Activated T-helper 1 cell treated with anti-CD3 and anti-CD28 coated beads, Interleukin-12 subunit alpha, Interleukin-12 subunit beta, Interleukin-2, Interleukin-4 antibody, amounts not matched to agents 30 ng/mL and 10 ng/mL and 1 ng/mL, durations not matched to agents 14 hours and 24 hours and 36 hours (primary cell): ENCODE measurements at regions of chr19 and their contacts with region 1.

Region 1: DNA sequence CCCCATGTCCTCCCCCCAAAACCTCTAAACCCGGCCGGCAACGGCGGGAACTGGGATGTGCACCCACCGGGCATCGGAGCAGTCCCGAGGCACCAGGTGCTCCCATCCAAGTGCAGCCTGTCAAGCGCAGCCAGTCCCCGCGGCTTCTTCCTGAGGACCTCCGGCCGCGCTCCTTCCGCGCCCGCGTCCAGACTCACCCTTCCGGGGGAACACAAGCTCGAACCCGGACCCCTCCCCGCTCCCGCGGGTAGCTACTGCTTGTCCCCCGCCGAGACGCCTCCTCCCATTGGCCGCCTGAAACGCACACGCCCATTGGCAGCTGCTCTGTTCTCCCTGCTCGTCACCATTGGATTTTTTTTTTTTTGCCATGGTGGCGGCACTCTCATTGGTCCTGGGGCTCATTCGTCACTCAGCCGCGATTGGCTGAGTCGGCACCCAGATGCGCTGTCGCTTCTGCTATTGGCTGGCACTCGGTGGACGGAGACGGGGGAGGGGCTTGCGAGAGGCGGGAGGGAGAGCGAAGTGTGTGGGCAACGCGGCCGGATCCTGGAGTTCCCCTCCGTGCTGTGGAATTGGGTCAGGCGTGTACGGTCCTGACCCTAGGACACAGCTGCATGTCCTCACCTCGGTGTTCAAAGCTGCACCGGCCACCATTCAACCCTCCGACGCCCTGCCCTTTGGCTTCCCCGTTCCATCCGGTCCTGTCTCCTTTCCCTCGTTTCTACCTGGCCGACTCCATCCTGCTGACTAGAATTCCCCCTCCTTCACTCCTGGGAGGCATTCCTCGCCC is at the start of gene TYK2:
- DNase-seq: peak; percentile 98
- H3K4me3 Mint-ChIP-seq: peak within 1 kb of the TSS; percentile 95
- H3K27ac Mint-ChIP-seq: peak within 1 kb of the TSS; percentile 97
- H3K4me1 Mint-ChIP-seq: peaks cover 27% of the 10 kb centered on the region
- H3K27me3 Mint-ChIP-seq: peaks cover 3% of the 10 kb centered on the region
- total RNA-seq, gene TYK2: 268 and 271 TPM in 2 replicates

Region 2: GRCh38 chr19:9834726-9835506 is 545.6 kb before region 1 on chr19 and contains the start of gene PIN1:
- intact Hi-C with region 1: loop called (anchors 1 kb)
- DNase-seq: peak; percentile 99
- H3K4me3 Mint-ChIP-seq: peak within 1 kb of the TSS; percentile 97
- H3K27ac Mint-ChIP-seq: peak within 1 kb of the TSS; percentile 90
- H3K4me1 Mint-ChIP-seq: peaks cover 10% of the 10 kb centered on the region
- H3K27me3 Mint-ChIP-seq: no peaks in the 10 kb centered on the region
- total RNA-seq, gene PIN1: 86.4 and 87.3 TPM in 2 replicates

Region 3: DNA sequence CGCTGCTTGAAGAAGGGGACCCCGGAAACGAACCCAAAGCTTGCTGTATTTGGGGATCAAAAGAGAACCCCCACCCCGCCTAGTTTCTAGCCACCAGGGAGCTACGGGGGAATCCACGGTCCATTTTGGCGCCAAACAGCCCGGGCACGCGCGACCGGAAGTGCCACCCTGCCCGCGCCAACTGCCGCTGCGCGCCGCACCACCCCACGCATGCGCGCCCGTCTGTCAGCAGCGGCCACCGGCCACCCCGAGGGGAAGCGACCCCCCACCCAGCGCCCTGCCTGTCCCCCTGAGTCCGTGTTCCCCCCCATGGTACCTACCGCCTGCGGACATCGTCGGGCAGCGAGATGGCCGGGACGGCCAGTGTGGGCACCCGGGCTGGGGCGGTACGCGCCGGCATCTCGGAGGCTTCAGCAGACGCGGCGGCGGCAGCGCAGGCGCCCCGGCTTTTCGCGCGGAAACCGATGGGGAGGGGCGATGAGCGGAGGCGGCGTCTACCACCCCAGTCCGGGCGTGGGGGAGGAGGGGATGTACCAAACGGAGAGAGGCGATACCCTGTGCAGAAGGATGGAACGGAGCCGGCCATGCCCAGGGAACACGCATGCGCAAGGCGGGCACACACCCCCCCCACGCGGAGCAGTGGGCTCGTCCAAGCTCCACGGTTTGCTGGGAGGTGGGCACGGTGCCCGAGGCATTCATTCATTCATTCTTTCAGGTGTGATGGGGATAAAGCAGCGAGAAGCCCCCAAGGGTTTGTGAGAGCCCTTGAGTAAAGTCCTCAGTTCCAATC is 185.8 kb before region 1 on chr19 and contains the start of gene DNMT1:
- intact Hi-C with region 1: loop called (anchors 10 kb)
- DNase-seq: peak; percentile 97
- H3K4me3 Mint-ChIP-seq: peak within 1 kb of the TSS; percentile 97
- H3K27ac Mint-ChIP-seq: peak within 1 kb of the TSS; percentile 97
- H3K4me1 Mint-ChIP-seq: peaks cover 16% of the 10 kb centered on the region
- H3K27me3 Mint-ChIP-seq: no peaks in the 10 kb centered on the region
- total RNA-seq, gene DNMT1: 411 and 425 TPM in 2 replicates

Region 4: DNA sequence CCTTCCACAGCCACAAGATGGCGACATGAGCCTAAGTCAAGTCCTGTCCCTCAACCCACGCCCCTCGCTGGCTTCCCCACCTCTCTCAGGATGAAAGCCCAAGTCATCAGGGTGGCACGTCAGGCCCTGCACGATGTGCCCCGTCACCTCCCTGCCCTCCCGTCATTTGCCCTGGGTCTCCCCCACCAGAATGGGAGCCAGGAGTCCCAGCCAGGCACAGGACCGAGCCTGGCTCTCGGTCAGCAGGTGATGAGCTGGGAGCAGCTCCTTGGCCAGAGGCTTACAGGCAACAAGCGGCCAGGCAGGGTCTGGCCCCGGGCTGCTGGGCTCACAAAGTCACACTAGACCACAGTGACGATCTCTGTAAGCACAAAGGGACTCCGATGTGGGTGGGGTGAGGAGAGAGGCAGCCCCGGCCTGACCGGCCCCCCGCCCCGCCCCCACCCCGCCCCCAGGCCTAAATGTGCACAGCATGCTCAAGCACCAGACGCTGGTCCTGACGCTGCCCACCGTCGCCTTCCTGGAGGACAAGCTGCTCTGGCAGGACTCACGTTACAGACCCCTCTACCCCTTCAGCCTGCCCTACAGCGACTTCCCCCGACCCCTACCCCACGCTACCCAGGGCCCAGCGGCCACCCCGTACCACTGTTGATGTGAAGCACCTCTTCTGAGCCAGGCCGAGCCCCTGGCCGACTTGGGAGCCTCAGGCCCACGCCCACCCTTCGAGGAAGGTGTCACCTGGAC is 121.2 kb before region 1 on chr19:
- intact Hi-C with region 1: loop called (anchors 2 kb)
- DNase-seq: peak; percentile 87
- H3K4me3 Mint-ChIP-seq: peak overlapping the region; percentile 68
- H3K27ac Mint-ChIP-seq: peak overlapping the region; percentile 93
- H3K4me1 Mint-ChIP-seq: peaks cover 21% of the 10 kb centered on the region
- H3K27me3 Mint-ChIP-seq: no peaks in the 10 kb centered on the region

Region 5: GRCh38 chr19:10269333-10270179 is 111.0 kb before region 1 on chr19:
- intact Hi-C with region 1: loop called (anchors 2 kb)
- DNase-seq: peak; percentile 84
- H3K4me3 Mint-ChIP-seq: peak overlapping the region; percentile 94
- H3K27ac Mint-ChIP-seq: peak overlapping the region; percentile 94
- H3K4me1 Mint-ChIP-seq: peaks cover 28% of the 10 kb centered on the region
- H3K27me3 Mint-ChIP-seq: no peaks in the 10 kb centered on the region

Region 6: GRCh38 chr19:10332955-10333757 is 47.4 kb before region 1 on chr19 and contains the start of gene RAVER1:
- intact Hi-C with region 1: loop called (anchors 1 kb)
- DNase-seq: peak; percentile 95
- H3K4me3 Mint-ChIP-seq: peak within 1 kb of the TSS; percentile 90
- H3K27ac Mint-ChIP-seq: peak within 1 kb of the TSS; percentile 95
- H3K4me1 Mint-ChIP-seq: peaks cover 11% of the 10 kb centered on the region
- H3K27me3 Mint-ChIP-seq: no peaks in the 10 kb centered on the region
- total RNA-seq, gene RAVER1: 92.5 and 92.8 TPM in 2 replicates

Region 7: GRCh38 chr19:10416380-10417257 is 36.1 kb after region 1 on chr19:
- intact Hi-C with region 1: loop called (anchors 1 kb)
- DNase-seq: peak; percentile 94
- H3K4me3 Mint-ChIP-seq: peak overlapping the region; percentile 81
- H3K27ac Mint-ChIP-seq: peak overlapping the region; percentile 94
- H3K4me1 Mint-ChIP-seq: peaks cover 51% of the 10 kb centered on the region
- H3K27me3 Mint-ChIP-seq: peaks cover 4% of the 10 kb centered on the region

Region 8: GRCh38 chr19:10427169-10427568 is 46.7 kb after region 1 on chr19:
- intact Hi-C with region 1: no loop called
- DNase-seq: no peak
- H3K4me3 Mint-ChIP-seq: no peak overlapping the region
- H3K27ac Mint-ChIP-seq: peak overlapping the region; percentile 94
- H3K4me1 Mint-ChIP-seq: peaks cover 83% of the 10 kb centered on the region
- H3K27me3 Mint-ChIP-seq: peaks cover 20% of the 10 kb centered on the region